Lower leg skin (tissue), 4 donors: ENCODE measurements at regions of chr9 and their contacts with region 1.

Region 1: DNA sequence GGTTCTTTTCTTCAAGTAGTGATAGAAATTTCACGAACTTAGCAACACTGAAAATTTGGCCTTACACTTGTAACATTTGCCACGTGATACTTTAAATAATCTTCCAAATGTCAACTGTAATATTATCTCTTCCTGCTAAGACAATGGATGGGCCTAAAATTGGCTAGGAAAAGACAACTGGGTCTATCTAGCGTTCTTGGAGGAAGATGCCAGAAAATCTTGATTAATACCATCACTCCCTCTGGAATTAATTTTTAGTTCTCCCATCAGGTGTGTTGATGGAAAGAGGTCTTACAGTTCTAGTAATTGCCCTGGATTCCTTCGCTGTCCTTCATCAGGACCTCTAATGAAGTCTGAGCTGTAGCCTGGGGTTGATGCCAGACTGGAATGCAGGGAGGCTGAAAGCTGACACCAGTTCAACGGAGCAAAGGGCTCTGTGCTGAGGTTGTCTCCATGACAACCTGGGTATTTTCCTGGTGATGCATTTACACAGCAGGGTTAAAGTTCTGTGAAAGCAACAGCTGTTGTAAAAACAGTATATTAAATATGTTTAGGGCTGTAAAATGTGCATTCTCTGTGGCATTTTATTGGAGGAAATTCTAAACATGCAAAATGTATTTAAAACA is 92.3 kb downstream of the GAS1 start:
- DNase-seq: no peak
- H3K4me3 ChIP-seq: no peak overlapping the region
- CTCF ChIP-seq: no peak
- POLR2A ChIP-seq: no peak

Region 2: GRCh38 chr9:86867804-86868313 is 12.8 kb after region 1 on chr9:
- intact Hi-C with region 1: loop called (anchors 1 kb)
- DNase-seq: no peak
- H3K4me3 ChIP-seq: no peak overlapping the region
- CTCF ChIP-seq: no peak
- POLR2A ChIP-seq: no peak